K562 (cell line): ENCODE measurements at regions of chr1 and their contacts with region 1.

Region 1: GRCh38 chr1:26529655-26530409 is at the start of gene RPS6KA1:
- DNase-seq: peak; percentile 84 to 99 (median 98)
- ATAC-seq: peak; percentile 86
- H3K4me3 ChIP-seq: peak within 1 kb of the TSS; percentile 87
- H3K27ac ChIP-seq: peak within 1 kb of the TSS; percentile 70
- H3K4me1 ChIP-seq: peaks cover 35 to 44% of the 10 kb centered on the region in 2 experiments
- H3K27me3 ChIP-seq: 0 out of 5 replicates have a peak, but pooled peaks cover 0 to 4% of the 10 kb centered on the region in 2 experiments
- CTCF ChIP-seq: peak in 1 of 3 experiments; percentile 9; a peak in 1 of 6 replicates
- EP300 ChIP-seq: no peak
- POLR2A ChIP-seq: no peak; the same call in 1 of the 2 replicates
- RAD21 ChIP-seq: no peak
- polyA plus RNA-seq, gene RPS6KA1: 2.4 to 2.9 TPM

Region 2: GRCh38 chr1:26459573-26460031 is 70.2 kb before region 1 on chr1:
- CTCF ChIA-PET with region 1: no interaction called
- POLR2A ChIA-PET with region 1: no interaction called
- in situ Hi-C with region 1: no loop called
- intact Hi-C with region 1: no loop called
- DNase-seq: no peak
- ATAC-seq: no peak
- H3K4me3 ChIP-seq: no peak overlapping the region
- H3K27ac ChIP-seq: no peak overlapping the region
- H3K4me1 ChIP-seq: no peaks in the 10 kb centered on the region
- H3K27me3 ChIP-seq: no peaks in the 10 kb centered on the region
- CTCF ChIP-seq: no peak
- EP300 ChIP-seq: no peak
- POLR2A ChIP-seq: no peak
- RAD21 ChIP-seq: no peak

Region 3: GRCh38 chr1:26516987-26517765 is 12.7 kb before region 1 on chr1:
- CTCF ChIA-PET with region 1: no interaction called
- POLR2A ChIA-PET with region 1: interaction called, 60 read pairs
- in situ Hi-C with region 1: no loop called
- intact Hi-C with region 1: no loop called
- DNase-seq: no peak
- ATAC-seq: peak; percentile 21
- H3K4me3 ChIP-seq: no peak overlapping the region
- H3K27ac ChIP-seq: no peak overlapping the region
- H3K4me1 ChIP-seq: peaks cover 4 to 5% of the 10 kb centered on the region in 2 experiments; a peak in 3 of 5 replicates
- H3K27me3 ChIP-seq: no peaks in the 10 kb centered on the region
- CTCF ChIP-seq: no peak
- EP300 ChIP-seq: no peak
- POLR2A ChIP-seq: no peak
- RAD21 ChIP-seq: no peak

Region 4: GRCh38 chr1:26541816-26542711 is 12.2 kb after region 1 on chr1:
- CTCF ChIA-PET with region 1: no interaction called
- POLR2A ChIA-PET with region 1: interaction called, 33 read pairs
- in situ Hi-C with region 1: no loop called
- intact Hi-C with region 1: no loop called
- DNase-seq: peak; percentile 91 to 95 (median 92)
- ATAC-seq: peak; percentile 98
- H3K4me3 ChIP-seq: no peak overlapping the region
- H3K27ac ChIP-seq: peak overlapping the region; percentile 68; the same call in 2 of the 3 replicates
- H3K4me1 ChIP-seq: peaks cover 29 to 39% of the 10 kb centered on the region in 2 experiments
- H3K27me3 ChIP-seq: no peaks in the 10 kb centered on the region
- CTCF ChIP-seq: peak; percentile 86 to 89 (median 88)
- EP300 ChIP-seq: peak; percentile 32; the same call in 1 of the 2 replicates
- POLR2A ChIP-seq: no peak
- RAD21 ChIP-seq: peak; percentile 52 to 65